T-cell (primary cell): ENCODE measurements at regions of chr10 and their contacts with region 1.

Region 1: DNA sequence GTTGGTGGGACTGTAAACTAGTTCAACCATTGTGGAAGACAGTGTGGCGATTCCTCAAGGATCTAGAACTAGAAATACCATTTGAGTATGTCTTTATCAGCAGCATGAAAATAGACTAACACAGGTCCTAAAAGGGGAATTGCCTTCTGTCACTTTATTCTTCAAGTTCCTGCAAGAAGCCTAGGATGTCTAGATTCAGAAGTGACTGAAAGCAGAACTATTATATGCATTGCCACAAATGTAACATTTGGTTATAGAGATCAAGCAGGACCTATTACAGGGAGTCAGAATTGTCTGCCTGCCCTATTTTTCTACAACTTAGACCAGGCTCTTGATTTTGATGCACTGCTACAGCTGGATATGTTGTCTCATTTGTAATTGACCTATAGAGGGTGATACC is 364.7 kb downstream of the SORCS1 start:
- DNase-seq: no peak
- ATAC-seq: no peak
- H3K4me3 ChIP-seq: no peak overlapping the region
- H3K4me3 Mint-ChIP-seq: no peak overlapping the region
- H3K27ac ChIP-seq: no peak overlapping the region
- H3K27ac Mint-ChIP-seq: no peak overlapping the region
- H3K4me1 ChIP-seq: no peaks in the 10 kb centered on the region
- H3K4me1 Mint-ChIP-seq: no peaks in the 10 kb centered on the region
- H3K27me3 ChIP-seq: no peaks in the 10 kb centered on the region
- H3K27me3 Mint-ChIP-seq: peaks cover 0 to 4% of the 10 kb centered on the region in 2 donors

Region 2: GRCh38 chr10:106571192-106571946 is 228.4 kb before region 1 on chr10:
- CTCF ChIA-PET with region 1: no interaction called
- POLR2A ChIA-PET with region 1: no interaction called
- DNase-seq: no peak
- ATAC-seq: no peak
- H3K4me3 ChIP-seq: no peak overlapping the region
- H3K4me3 Mint-ChIP-seq: no peak overlapping the region
- H3K27ac ChIP-seq: no peak overlapping the region
- H3K27ac Mint-ChIP-seq: no peak overlapping the region
- H3K4me1 ChIP-seq: no peaks in the 10 kb centered on the region
- H3K4me1 Mint-ChIP-seq: no peaks in the 10 kb centered on the region
- H3K27me3 ChIP-seq: no peaks in the 10 kb centered on the region
- H3K27me3 Mint-ChIP-seq: no peaks in the 10 kb centered on the region

Region 3: DNA sequence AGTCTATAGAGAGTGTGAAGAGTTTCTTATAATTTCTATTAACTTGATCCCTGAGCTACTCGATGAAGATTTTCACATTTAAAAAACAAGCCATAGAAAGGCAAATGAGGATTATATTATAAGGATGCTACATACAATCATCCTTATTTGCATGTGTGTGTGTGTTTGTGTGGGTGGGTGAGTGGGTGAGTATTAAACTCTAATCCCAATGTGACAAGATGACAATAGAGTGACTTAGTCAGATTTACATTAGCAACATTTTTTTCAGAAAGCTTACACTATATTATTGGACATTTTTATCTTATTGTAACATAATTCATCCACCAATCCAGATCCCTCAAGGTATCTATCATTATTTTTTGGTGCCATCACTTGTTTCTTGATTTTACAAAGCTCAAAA is 33.1 kb after region 1 on chr10:
- CTCF ChIA-PET with region 1: no interaction called
- POLR2A ChIA-PET with region 1: no interaction called
- DNase-seq: no peak
- ATAC-seq: no peak
- H3K4me3 ChIP-seq: no peak overlapping the region
- H3K4me3 Mint-ChIP-seq: no peak overlapping the region
- H3K27ac ChIP-seq: no peak overlapping the region
- H3K27ac Mint-ChIP-seq: no peak overlapping the region
- H3K4me1 ChIP-seq: peaks cover 0 to 4% of the 10 kb centered on the region in 2 experiments
- H3K4me1 Mint-ChIP-seq: peaks cover 1 to 7% (median 6%) of the 10 kb centered on the region in 3 donors
- H3K27me3 ChIP-seq: no peaks in the 10 kb centered on the region
- H3K27me3 Mint-ChIP-seq: no peaks in the 10 kb centered on the region

Region 4: GRCh38 chr10:106857213-106857612 is 57.4 kb after region 1 on chr10:
- CTCF ChIA-PET with region 1: no interaction called
- POLR2A ChIA-PET with region 1: interaction called in 1 of 2 experiments, 11 read pairs
- DNase-seq: no peak
- ATAC-seq: no peak
- H3K4me3 ChIP-seq: no peak overlapping the region
- H3K4me3 Mint-ChIP-seq: no peak overlapping the region
- H3K27ac ChIP-seq: no peak overlapping the region
- H3K27ac Mint-ChIP-seq: no peak overlapping the region
- H3K4me1 ChIP-seq: no peaks in the 10 kb centered on the region
- H3K4me1 Mint-ChIP-seq: no peaks in the 10 kb centered on the region
- H3K27me3 ChIP-seq: no peaks in the 10 kb centered on the region
- H3K27me3 Mint-ChIP-seq: no peaks in the 10 kb centered on the region